A673 (cell line): ENCODE measurements at regions of chr12 and their contacts with region 1.

Region 1: DNA sequence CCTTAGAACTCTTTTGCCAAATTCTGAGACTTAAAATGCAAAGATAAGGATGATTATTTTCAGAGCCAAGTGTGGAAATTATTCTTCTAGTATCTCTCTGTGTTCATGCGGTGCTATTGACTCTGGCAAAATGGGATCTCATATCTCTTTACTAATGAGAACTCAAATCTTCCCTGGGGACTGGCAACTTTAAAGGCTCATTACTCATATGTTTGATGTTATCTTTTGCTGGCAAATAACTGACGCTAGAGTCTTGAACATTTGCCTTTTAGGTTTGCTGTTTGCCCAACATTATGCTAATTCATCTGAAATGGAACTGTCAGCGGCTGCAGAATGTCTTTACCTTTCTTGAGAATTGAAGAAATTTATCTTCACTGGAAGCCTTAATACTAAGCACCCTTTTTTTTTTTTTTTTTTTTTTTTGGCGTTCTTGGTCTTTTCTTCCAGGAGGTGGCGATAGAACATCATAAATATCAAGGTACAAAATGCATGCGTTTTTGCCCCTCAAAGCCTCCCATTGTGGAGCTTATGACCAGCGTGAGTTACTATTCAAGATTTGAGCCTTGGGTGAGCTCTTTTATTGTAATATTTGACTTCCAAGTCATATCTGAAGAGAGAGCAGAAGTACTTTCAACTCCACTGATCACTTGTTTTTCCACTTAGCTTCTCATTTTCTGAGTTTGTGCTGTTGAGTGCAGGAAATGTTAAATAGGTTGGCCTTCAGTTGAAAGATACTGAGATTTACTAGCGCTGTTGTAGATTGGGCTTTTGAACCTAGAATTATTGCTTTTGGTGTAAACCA is 86.6 kb downstream of the CAND1 start:
- DNase-seq: peak; percentile 73
- H3K4me3 ChIP-seq: no peak overlapping the region
- H3K27ac ChIP-seq: no peak overlapping the region
- H3K4me1 ChIP-seq: peaks cover 16% of the 10 kb centered on the region
- H3K27me3 ChIP-seq: peaks cover 18% of the 10 kb centered on the region
- CTCF ChIP-seq: peak; percentile 73

Region 2: DNA sequence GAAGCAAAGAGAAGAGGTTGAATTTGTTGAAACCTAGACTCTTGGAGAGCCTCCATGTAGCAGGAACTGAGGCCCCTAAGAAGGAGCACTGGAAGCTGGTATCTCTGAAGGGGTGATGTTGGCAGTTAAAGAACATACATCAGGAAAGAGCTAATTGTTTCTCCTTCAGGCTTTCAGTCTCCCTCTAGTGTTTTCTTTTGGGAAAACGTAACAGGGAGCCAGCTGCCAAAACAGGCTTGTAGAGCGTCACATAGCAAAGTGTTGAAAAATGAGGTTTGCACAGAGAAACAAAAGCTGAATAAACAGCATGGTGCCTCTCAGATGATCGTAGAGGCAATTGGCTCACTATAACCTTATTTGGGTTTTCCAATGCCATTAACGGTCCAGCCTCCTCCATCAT is 133.5 kb before region 1 on chr12:
- CTCF ChIA-PET with region 1: no interaction called
- POLR2A ChIA-PET with region 1: no interaction called
- intact Hi-C with region 1: no loop called
- DNase-seq: peak; percentile 60
- H3K4me3 ChIP-seq: no peak overlapping the region
- H3K27ac ChIP-seq: no peak overlapping the region
- H3K4me1 ChIP-seq: no peaks in the 10 kb centered on the region
- H3K27me3 ChIP-seq: peaks cover 16% of the 10 kb centered on the region
- CTCF ChIP-seq: peak; percentile 58

Region 3: GRCh38 chr12:67415473-67415872 is 59.7 kb after region 1 on chr12:
- CTCF ChIA-PET with region 1: interaction called, 9 read pairs
- POLR2A ChIA-PET with region 1: no interaction called
- intact Hi-C with region 1: loop called (anchors 1 kb)
- DNase-seq: peak; percentile 67
- H3K4me3 ChIP-seq: no peak overlapping the region
- H3K27ac ChIP-seq: no peak overlapping the region
- H3K4me1 ChIP-seq: peaks cover 5% of the 10 kb centered on the region
- H3K27me3 ChIP-seq: peaks cover 6% of the 10 kb centered on the region
- CTCF ChIP-seq: peak; percentile 72

Region 4: DNA sequence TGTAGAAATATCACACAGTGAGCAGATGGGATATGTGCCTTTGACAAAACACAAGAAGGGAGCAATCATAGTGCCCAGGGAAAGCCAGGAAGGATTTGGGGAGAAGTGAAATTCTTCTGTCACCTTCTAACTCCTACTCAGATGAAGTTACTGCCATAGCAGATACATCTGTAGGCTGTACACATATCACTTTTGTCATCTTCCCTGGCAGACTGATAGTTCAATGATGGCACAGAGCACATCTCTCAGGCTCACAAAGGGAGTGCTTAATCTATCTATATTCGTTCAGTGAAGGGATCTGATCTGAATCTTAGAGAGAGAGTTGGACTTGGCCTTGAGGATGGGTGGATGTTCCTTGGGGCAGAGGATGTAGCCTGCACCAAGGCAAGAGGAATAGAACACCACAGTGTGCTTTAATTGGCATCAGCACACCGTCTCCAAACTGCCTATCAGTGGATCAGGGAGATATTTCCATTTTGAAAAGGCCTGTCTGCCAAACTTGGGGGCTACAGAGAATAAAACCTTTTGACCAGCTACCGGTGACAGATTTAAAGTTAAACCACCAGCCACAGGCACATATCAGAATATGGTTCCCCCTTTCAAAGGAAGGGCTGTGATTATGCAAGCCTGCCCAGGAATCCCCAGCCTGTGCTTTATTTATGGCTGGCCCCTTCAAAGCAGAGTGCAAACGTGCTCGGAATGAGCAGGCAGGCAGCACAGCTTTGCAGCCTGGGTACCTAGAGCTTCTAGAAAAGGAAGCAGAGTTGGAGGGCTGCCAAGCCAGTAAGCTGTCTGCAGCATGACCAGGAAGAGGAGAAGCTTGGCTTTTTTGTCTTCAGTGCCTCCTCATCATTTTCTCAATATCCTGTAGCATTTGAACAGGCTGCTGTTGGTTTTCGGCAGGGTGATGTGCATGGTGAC is 127.2 kb after region 1 on chr12:
- CTCF ChIA-PET with region 1: interaction called, 15 read pairs
- POLR2A ChIA-PET with region 1: no interaction called
- intact Hi-C with region 1: no loop called
- DNase-seq: peak; percentile 46
- H3K4me3 ChIP-seq: no peak overlapping the region
- H3K27ac ChIP-seq: no peak overlapping the region
- H3K4me1 ChIP-seq: no peaks in the 10 kb centered on the region
- H3K27me3 ChIP-seq: no peaks in the 10 kb centered on the region
- CTCF ChIP-seq: no peak

Region 5: DNA sequence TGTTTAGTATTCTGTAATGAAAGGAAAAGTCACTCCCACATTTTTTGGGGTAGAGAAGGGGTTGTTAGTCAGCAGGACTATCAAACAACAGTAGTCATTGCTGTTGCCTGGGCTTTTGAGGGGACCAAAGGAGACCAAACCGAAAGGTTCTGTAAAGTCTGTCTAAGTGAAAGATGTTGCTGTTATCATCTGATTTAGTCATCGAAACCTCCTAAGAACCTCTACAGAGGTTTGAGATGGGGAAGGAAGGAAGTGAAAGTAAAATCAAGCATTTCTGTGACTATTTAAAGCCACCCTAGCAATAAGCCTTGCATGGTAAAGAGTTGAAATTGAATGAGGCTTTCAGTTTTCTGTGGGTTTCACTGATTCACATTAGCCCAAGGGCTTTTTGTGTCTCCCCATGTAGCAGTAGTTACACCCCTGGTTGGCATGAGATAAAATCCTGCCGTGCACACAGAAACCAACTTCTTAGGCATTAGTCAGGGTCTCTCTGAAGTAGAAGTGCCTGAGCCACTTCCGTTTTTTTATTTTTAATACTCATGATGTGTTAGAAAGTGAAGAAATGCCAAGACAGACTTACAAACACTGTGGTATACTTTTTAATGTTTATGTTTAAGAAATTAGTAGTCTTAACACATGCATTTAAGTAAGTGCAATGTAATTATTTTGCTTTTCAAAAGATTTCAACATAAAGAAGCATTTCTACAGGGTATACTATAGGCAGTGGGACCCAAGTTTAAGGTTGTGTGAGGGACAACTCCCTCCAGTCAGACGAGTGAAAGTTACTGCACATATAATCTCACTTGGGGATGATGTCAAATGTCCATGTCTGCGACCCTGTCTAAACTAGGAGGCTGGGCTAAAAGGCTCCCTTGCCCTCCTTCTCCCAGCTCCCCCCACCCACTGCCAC is 343.1 kb after region 1 on chr12:
- CTCF ChIA-PET with region 1: interaction called, 15 read pairs
- POLR2A ChIA-PET with region 1: no interaction called
- intact Hi-C with region 1: no loop called
- DNase-seq: no peak
- H3K4me3 ChIP-seq: no peak overlapping the region
- H3K27ac ChIP-seq: no peak overlapping the region
- H3K4me1 ChIP-seq: no peaks in the 10 kb centered on the region
- H3K27me3 ChIP-seq: no peaks in the 10 kb centered on the region
- CTCF ChIP-seq: no peak

Region 6: DNA sequence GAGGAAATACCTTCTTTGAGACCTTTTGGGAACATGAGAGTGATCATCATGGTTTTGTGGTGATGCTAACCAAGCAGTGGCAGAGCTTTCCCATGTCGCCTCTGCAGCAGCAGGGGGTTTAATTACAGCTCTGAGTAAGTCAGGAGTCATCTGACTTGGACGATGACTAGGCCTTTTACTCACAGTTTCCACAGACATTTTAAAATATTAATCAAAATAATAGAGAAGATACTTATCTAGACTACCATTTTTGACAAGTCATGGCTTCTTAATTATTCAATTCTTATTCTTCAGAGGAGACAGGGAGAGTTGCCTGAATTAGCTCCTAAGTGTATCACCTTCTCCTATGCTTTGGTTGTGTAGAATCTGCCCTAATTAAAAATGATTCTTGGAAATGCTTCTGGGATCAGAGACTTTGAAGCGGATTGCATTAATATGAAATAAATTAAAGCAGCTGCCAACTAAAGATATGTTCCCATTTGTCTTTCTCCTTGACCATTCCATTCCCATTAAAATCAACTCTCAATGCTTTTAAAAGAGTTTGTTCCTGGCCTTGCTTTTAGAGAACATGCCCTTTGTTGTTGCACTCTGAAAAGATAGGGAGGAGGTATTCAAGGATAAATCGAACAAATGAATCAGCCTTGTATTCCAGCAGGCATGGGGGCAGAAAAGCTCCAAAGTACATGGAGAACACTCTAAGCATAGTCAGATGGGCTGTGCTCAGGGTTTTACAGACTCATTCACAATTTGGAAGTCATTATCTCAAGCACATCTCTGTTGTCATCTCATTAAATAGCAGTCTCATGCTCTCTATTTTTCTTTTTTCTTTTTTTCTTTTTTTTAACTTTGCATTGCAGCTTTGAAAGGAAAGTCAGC is 625.7 kb after region 1 on chr12:
- CTCF ChIA-PET with region 1: interaction called, 14 read pairs
- POLR2A ChIA-PET with region 1: no interaction called
- intact Hi-C with region 1: no loop called
- DNase-seq: peak; percentile 82
- H3K4me3 ChIP-seq: no peak overlapping the region
- H3K27ac ChIP-seq: no peak overlapping the region
- H3K4me1 ChIP-seq: no peaks in the 10 kb centered on the region
- H3K27me3 ChIP-seq: no peaks in the 10 kb centered on the region
- CTCF ChIP-seq: no peak